Heart right ventricle (tissue), 16 donors: ENCODE measurements at regions of chr4 and their contacts with region 1.

Region 1: GRCh38 chr4:151801547-151802516 is 41.0 kb upstream of the GATB start:
- DNase-seq: no peak
- ATAC-seq: no peak
- H3K4me3 ChIP-seq: no peak overlapping the region
- H3K27ac ChIP-seq: peak overlapping the region in 1 of 10 donors; percentile 32
- H3K4me1 ChIP-seq: peaks cover 0 to 31% (median 9%) of the 10 kb centered on the region in 9 donors
- H3K27me3 ChIP-seq: no peaks in the 10 kb centered on the region
- CTCF ChIP-seq: peak; percentile 48 to 95 (median 72)

Region 2: GRCh38 chr4:151690164-151690870 is 111.5 kb before region 1 on chr4:
- intact Hi-C with region 1: loop called in 2 of 10 experiments (anchors 2 to 5 kb)
- DNase-seq: no peak
- ATAC-seq: no peak
- H3K4me3 ChIP-seq: no peak overlapping the region
- H3K27ac ChIP-seq: peak overlapping the region in 9 of 10 donors; percentile 16 to 93 (median 82)
- H3K4me1 ChIP-seq: peaks cover 28 to 92% (median 52%) of the 10 kb centered on the region in 9 donors
- H3K27me3 ChIP-seq: no peaks in the 10 kb centered on the region
- CTCF ChIP-seq: no peak

Region 3: DNA sequence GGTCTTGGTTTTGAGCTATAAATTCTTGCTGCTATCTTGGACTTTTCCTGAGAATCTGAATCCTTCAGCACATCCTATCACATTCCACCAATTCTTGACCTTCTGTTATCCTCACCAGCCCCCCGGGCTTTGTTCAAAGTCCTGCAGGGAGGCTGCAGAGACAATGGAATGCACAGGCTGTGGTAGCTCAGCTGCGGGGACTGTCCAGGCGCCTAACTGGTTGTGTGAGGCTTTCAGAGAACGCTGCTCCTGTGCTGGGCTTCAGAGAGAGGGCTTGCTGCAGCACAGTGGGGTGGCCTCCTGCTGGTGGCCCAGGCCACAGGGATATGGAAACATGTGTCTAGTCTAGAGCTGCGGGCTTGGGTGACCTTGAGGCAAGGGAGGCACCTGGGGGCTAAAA is 155.3 kb after region 1 on chr4:
- intact Hi-C with region 1: loop called in 1 of 10 experiments (anchors 10 kb)
- DNase-seq: peak; percentile 16 to 19
- ATAC-seq: peak in 6 of 8 donors; percentile 11 to 69 (median 50)
- H3K4me3 ChIP-seq: no peak overlapping the region
- H3K27ac ChIP-seq: peak overlapping the region in 6 of 10 donors; percentile 52 to 79 (median 62)
- H3K4me1 ChIP-seq: peaks cover 0 to 38% (median 10%) of the 10 kb centered on the region in 9 donors
- H3K27me3 ChIP-seq: no peaks in the 10 kb centered on the region
- CTCF ChIP-seq: peak in 3 of 9 donors; percentile 12 to 24 (median 16)

Region 4: GRCh38 chr4:152039023-152039481 is 237.2 kb after region 1 on chr4:
- intact Hi-C with region 1: loop called in 5 of 10 experiments (anchors 2 to 10 kb)
- DNase-seq: peak in 1 of 2 donors; percentile 26
- ATAC-seq: peak in 7 of 8 donors; percentile 37 to 93 (median 78)
- H3K4me3 ChIP-seq: no peak overlapping the region
- H3K27ac ChIP-seq: peak overlapping the region; percentile 47 to 94 (median 82)
- H3K4me1 ChIP-seq: peaks cover 0 to 18% (median 4%) of the 10 kb centered on the region in 9 donors
- H3K27me3 ChIP-seq: no peaks in the 10 kb centered on the region
- CTCF ChIP-seq: no peak

Region 5: GRCh38 chr4:152385551-152385950 is 583.7 kb after region 1 on chr4:
- intact Hi-C with region 1: loop called in 2 of 10 experiments (anchors 10 kb)
- DNase-seq: no peak
- ATAC-seq: peak in 1 of 8 donors; percentile 47
- H3K4me3 ChIP-seq: no peak overlapping the region
- H3K27ac ChIP-seq: no peak overlapping the region
- H3K4me1 ChIP-seq: peaks cover 0 to 31% (median 9%) of the 10 kb centered on the region in 9 donors
- H3K27me3 ChIP-seq: no peaks in the 10 kb centered on the region
- CTCF ChIP-seq: peak; percentile 37 to 80 (median 69)